Spleen (tissue), 13 donors: ENCODE measurements at regions of chr10 and their contacts with region 1.

Region 1: GRCh38 chr10:95841661-95842498 is 65.9 kb upstream of the CC2D2B start:
- DNase-seq: no peak
- H3K4me3 ChIP-seq: peak overlapping the region in 1 of 8 donors; percentile 37
- H3K27ac ChIP-seq: peak overlapping the region; percentile 50 to 88 (median 67)
- H3K4me1 ChIP-seq: peaks cover 20 to 61% (median 45%) of the 10 kb centered on the region in 6 donors
- H3K27me3 ChIP-seq: no peaks in the 10 kb centered on the region
- CTCF ChIP-seq: peak; percentile 59 to 92 (median 81)
- POLR2A ChIP-seq: no peak

Region 2: GRCh38 chr10:95693668-95694534 is 148.0 kb before region 1 on chr10 and contains the start of gene TCTN3:
- intact Hi-C with region 1: loop called (anchors 5 kb)
- DNase-seq: peak; percentile 99
- H3K4me3 ChIP-seq: peak within 1 kb of the TSS; percentile 70 to 93 (median 86)
- H3K27ac ChIP-seq: peak within 1 kb of the TSS; percentile 58 to 89 (median 82)
- H3K4me1 ChIP-seq: peaks cover 8 to 69% (median 46%) of the 10 kb centered on the region in 6 donors
- H3K27me3 ChIP-seq: no peaks in the 10 kb centered on the region
- CTCF ChIP-seq: peak; percentile 99 to 100 (median 100)
- POLR2A ChIP-seq: peak in 1 of 3 donors; percentile 63
- total RNA-seq, gene TCTN3: 21.4 to 25.7 (median 24.9) TPM